ENCODE measurements at regions of chr1 and their contacts with region 1.

Region 1: DNA sequence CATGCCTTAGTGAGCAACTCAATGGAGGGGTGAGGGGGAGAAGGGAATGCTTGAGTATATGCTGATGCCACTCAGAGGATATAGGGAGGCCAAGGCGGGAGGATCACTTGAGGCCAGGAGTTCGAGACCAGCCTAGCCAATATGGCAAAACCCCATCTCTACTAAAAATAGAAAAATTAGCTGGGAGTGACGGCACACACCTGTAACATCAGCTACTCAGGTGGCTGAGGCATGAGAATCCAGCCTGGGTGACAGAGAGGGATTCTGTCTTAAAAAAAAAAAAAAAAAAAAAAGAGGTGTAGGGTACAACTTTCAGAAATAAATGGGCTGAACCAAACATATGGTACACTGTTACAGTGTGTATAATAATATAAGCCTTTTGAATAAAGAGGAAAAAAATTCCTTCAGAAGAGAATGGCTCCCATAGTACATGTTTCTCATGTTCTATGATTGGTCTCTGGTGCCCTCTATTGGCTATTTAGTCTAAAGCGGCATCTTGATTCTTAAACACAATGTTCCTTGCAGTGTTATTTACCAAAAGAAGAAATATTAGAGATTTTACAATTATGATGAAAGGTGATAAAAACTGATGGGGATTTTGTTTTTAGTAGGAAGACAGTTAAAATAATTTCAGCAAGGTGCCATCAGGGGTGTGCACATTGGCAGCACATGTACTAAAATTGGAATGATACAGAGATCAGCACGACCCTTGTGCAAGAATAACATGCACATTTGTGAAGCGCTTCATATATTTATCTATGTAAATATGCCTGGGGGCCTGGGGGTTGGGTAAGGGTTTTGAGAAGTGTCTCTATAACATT is 109.8 kb downstream of the PATJ start:
- DNase-seq: no peak
- ATAC-seq: peak; percentile 84
- H3K4me3 ChIP-seq: no peak overlapping the region
- H3K27ac ChIP-seq: no peak overlapping the region
- H3K4me1 ChIP-seq: no peaks in the 10 kb centered on the region
- H3K27me3 ChIP-seq: no peaks in the 10 kb centered on the region
- CTCF ChIP-seq: peak; percentile 75; the same call in 1 of the 2 replicates

Region 2: DNA sequence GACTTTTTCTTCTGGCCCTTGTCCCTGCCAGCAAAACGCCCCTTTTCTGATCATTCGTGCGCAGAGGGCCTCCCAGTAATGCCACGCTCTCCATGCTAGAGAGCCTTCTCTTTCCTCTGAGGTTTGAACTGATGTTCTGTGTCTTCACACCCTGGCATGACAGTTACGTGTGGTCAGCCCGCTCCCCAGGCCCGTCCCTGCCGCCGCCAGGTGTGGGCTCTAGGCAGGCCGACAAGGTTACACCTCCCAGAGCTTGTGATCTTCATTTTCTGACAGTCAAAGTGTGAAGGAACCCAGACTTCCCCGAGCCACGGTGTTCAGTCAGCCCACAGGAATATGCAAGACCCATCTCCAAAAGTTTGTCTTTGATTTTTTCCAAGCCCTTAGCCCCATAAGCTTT is 392.7 kb before region 1 on chr1:
- CTCF ChIA-PET with region 1: interaction called, 15 read pairs
- POLR2A ChIA-PET with region 1: no interaction called
- in situ Hi-C with region 1: no loop called
- intact Hi-C with region 1: no loop called
- DNase-seq: no peak
- ATAC-seq: no peak
- H3K4me3 ChIP-seq: no peak overlapping the region
- H3K27ac ChIP-seq: no peak overlapping the region
- H3K4me1 ChIP-seq: no peaks in the 10 kb centered on the region
- H3K27me3 ChIP-seq: no peaks in the 10 kb centered on the region
- CTCF ChIP-seq: no peak

Region 3: DNA sequence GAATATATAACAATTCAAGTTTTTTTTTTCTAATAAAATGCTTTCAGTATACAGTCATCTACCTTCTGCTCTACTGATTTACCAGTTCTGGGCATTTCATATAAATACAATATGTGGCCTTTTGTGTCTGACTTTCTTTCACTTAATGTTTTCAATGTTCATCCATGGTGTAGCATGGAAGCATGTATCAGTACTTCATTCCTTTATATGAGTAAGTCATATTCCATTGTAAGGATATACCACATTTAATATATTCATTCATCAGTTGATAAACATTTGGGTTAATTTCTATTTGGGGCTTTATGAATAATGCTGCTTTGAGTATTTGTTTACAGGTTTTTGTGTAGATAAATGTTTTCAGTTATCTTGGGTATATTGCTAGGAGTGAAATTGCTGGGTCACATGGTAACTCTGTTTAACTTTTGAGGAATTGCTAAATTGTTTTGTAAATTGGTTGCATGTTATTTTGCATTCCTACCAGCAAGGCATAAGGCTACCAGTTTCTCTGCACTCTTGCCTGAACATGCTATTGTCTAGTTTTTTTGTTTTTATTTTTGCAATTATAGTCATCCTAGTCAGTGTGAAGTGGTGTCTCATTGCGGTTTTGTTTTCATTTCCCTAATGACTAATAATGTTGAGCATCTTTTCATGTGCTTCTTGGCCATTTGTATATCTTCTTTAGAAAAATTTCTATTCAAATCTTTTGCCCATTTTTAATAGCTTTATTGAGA is 333.2 kb before region 1 on chr1:
- CTCF ChIA-PET with region 1: no interaction called
- POLR2A ChIA-PET with region 1: no interaction called
- in situ Hi-C with region 1: no loop called
- intact Hi-C with region 1: no loop called
- DNase-seq: no peak
- ATAC-seq: no peak
- H3K4me3 ChIP-seq: no peak overlapping the region
- H3K27ac ChIP-seq: no peak overlapping the region
- H3K4me1 ChIP-seq: no peaks in the 10 kb centered on the region
- H3K27me3 ChIP-seq: peaks cover 8% of the 10 kb centered on the region
- CTCF ChIP-seq: no peak

Region 4: GRCh38 chr1:62484824-62485468 is 632.9 kb after region 1 on chr1:
- CTCF ChIA-PET with region 1: interaction called, 10 read pairs
- POLR2A ChIA-PET with region 1: no interaction called
- in situ Hi-C with region 1: no loop called
- intact Hi-C with region 1: no loop called
- DNase-seq: no peak
- ATAC-seq: no peak
- H3K4me3 ChIP-seq: no peak overlapping the region
- H3K27ac ChIP-seq: no peak overlapping the region
- H3K4me1 ChIP-seq: no peaks in the 10 kb centered on the region
- H3K27me3 ChIP-seq: no peaks in the 10 kb centered on the region
- CTCF ChIP-seq: no peak

Measured in Panc1 (cell line).